SK-N-SH (cell line): ENCODE measurements at regions of chr10 and their contacts with region 1.

Region 1: GRCh38 chr10:25875556-25876165 is 58.4 kb upstream of the MYO3A start:
- DNase-seq: peak; percentile 53
- H3K4me3 ChIP-seq: no peak overlapping the region; a peak in 1 of 4 replicates
- H3K27ac ChIP-seq: no peak overlapping the region
- H3K4me1 ChIP-seq: no peaks in the 10 kb centered on the region
- H3K27me3 ChIP-seq: no peaks in the 10 kb centered on the region
- CTCF ChIP-seq: peak; percentile 91
- EP300 ChIP-seq: no peak
- RAD21 ChIP-seq: peak; percentile 73

Region 2: GRCh38 chr10:25865267-25865666 is 10.4 kb before region 1 on chr10:
- CTCF ChIA-PET with region 1: interaction called, 23 read pairs
- POLR2A ChIA-PET with region 1: no interaction called
- DNase-seq: no peak
- H3K4me3 ChIP-seq: no peak overlapping the region
- H3K27ac ChIP-seq: no peak overlapping the region
- H3K4me1 ChIP-seq: no peaks in the 10 kb centered on the region
- H3K27me3 ChIP-seq: no peaks in the 10 kb centered on the region
- CTCF ChIP-seq: no peak
- EP300 ChIP-seq: no peak
- RAD21 ChIP-seq: no peak

Region 3: DNA sequence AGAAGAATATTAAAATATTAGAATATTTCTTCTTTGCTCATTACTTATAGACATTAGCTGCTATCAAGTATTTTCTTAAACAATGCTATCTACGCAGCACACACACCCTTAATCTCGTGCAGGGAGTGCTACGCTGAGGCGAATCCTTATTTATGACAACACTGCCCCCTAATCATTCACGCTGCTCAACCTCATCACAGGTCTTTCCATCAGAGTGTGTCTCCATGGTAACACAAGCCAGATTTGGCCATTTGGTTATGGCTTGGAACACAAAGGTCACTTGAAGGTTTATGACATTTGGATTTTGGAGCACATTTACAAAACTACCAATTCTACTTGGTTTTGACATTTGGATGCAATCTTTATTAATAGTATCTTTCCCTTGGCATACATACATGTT is 13.0 kb after region 1 on chr10:
- CTCF ChIA-PET with region 1: interaction called, 15 read pairs
- POLR2A ChIA-PET with region 1: no interaction called
- DNase-seq: peak; percentile 3
- H3K4me3 ChIP-seq: no peak overlapping the region
- H3K27ac ChIP-seq: no peak overlapping the region
- H3K4me1 ChIP-seq: no peaks in the 10 kb centered on the region
- H3K27me3 ChIP-seq: no peaks in the 10 kb centered on the region
- CTCF ChIP-seq: no peak
- EP300 ChIP-seq: no peak
- RAD21 ChIP-seq: no peak

Region 4: GRCh38 chr10:25974897-25975459 is 99.3 kb after region 1 on chr10:
- CTCF ChIA-PET with region 1: no interaction called
- POLR2A ChIA-PET with region 1: no interaction called
- DNase-seq: no peak
- H3K4me3 ChIP-seq: no peak overlapping the region
- H3K27ac ChIP-seq: no peak overlapping the region
- H3K4me1 ChIP-seq: no peaks in the 10 kb centered on the region
- H3K27me3 ChIP-seq: no peaks in the 10 kb centered on the region
- CTCF ChIP-seq: no peak
- EP300 ChIP-seq: no peak
- RAD21 ChIP-seq: no peak

Region 5: GRCh38 chr10:26556748-26557640 is 681.3 kb after region 1 on chr10:
- CTCF ChIA-PET with region 1: interaction called, 10 read pairs
- POLR2A ChIA-PET with region 1: no interaction called
- DNase-seq: peak; percentile 61
- H3K4me3 ChIP-seq: peak overlapping the region in 1 of 2 experiments; percentile 38; a peak in 1 of 4 replicates
- H3K27ac ChIP-seq: no peak overlapping the region
- H3K4me1 ChIP-seq: no peaks in the 10 kb centered on the region
- H3K27me3 ChIP-seq: no peaks in the 10 kb centered on the region; the same call in 1 of the 2 replicates
- CTCF ChIP-seq: peak; percentile 90
- EP300 ChIP-seq: no peak
- RAD21 ChIP-seq: peak; percentile 92